ENCODE measurements at regions of chr6 and their contacts with region 1.

Region 1: DNA sequence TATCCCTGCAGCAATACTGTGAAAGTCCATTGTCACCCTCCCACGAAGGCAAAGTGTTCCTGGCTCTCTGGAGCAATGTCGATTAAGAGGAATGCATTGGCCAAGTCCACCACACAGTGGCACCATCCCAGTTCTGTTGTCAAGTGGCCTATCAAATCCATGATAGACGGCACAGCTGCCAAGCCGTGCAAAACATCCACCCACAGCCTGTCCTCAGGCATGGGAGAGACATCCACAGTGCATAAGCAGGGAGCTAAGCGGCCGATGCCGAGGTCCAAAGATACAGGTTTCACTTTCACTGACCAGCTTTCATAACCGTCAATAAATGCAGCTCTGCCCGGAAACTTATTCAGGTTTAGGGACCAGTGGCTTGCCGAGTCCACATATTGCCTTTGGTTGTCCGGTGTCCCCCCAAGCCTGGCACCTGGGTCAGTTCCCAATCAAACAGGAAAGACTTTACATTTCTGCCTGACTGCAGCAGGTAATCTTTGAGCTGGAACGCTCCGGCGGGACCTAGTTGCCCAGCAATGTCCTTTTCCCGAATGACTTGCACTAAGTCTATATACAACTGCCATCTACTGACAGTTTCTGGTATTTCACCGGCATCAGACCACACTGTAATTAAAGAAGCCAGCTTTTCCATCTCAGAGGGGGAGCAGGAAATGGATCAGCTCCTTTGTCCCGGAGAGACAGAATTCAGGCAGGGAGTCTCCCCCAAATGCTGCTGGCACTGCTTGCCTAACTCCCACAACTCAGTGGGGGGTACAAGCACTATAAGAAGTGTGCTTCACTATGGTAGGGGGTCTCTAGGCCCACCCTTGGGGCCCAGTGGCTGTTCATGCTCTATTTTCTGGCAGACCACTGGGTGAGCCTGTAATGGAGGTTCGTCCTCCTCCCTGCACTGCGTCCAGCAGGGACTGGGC is 6.3 kb downstream of the ZKSCAN3 start:
- DNase-seq: peak; percentile 71
- CTCF ChIP-seq: peak; percentile 83

Region 2: GRCh38 chr6:27893059-27893835 is 462.8 kb before region 1 on chr6:
- in situ Hi-C with region 1: loop called (anchors 10 kb)
- DNase-seq: peak; percentile 90
- CTCF ChIP-seq: no peak

Region 3: GRCh38 chr6:28136585-28137504 is 219.2 kb before region 1 on chr6:
- in situ Hi-C with region 1: loop called (anchors 10 kb)
- DNase-seq: peak; percentile 77
- CTCF ChIP-seq: no peak

Region 4: DNA sequence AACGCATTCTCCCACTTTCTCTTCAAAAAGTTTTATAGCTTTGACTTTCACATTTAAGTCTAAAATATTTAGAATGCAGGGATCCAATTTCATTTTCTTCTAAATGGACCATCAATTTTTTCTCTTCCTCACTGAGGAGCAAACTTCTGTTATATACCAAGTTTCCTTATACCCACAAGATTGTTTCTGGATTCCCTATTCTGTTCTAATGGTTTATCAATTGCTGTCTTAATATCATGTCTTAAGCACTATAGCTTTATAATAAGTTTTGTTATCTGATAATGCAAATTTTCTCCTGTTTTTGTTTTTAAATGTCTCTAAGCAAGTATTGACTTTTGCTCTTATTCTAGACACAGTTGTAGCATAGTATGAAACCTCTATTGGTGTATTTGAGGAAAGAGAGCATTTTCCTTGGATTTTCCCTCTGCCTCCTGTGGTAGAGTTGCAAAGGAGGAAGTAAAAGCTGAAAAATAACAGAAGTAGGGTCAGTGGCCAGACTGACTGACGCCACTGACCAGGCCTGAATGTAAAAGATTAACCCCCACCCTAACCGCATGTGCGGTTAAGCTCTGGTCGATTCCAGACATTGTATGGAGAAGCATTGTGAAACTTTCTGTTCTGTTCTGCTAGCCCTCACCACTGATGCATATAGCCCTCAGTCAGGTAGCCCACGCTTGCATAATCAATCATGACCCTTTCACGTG is 210.0 kb after region 1 on chr6:
- in situ Hi-C with region 1: no loop called
- DNase-seq: no peak
- CTCF ChIP-seq: no peak

Measured in GM13976 (cell line).